Activated CD4-positive, alpha-beta T cell treated with anti-CD3 and anti-CD28 coated beads for 36 hours (primary cell): ENCODE measurements at regions of chr17 and their contacts with region 1.

Region 1: GRCh38 chr17:66301797-66302741 is at the start of gene PRKCA:
- DNase-seq: peak; percentile 85
- ATAC-seq: peak; percentile 59
- H3K4me3 Mint-ChIP-seq: peak within 1 kb of the TSS; percentile 97
- H3K27ac Mint-ChIP-seq: peak within 1 kb of the TSS; percentile 100
- H3K4me1 Mint-ChIP-seq: peaks cover 42% of the 10 kb centered on the region
- H3K27me3 Mint-ChIP-seq: no peaks in the 10 kb centered on the region
- total RNA-seq, gene PRKCA: 73.3 to 77.0 TPM

Region 2: GRCh38 chr17:65931246-65932149 is 370.6 kb before region 1 on chr17:
- CTCF ChIA-PET with region 1: no interaction called
- POLR2A ChIA-PET with region 1: no interaction called
- intact Hi-C with region 1: no loop called
- DNase-seq: no peak
- ATAC-seq: no peak
- H3K4me3 Mint-ChIP-seq: no peak overlapping the region
- H3K27ac Mint-ChIP-seq: no peak overlapping the region
- H3K4me1 Mint-ChIP-seq: peaks cover 2% of the 10 kb centered on the region
- H3K27me3 Mint-ChIP-seq: peaks cover 5% of the 10 kb centered on the region

Region 3: DNA sequence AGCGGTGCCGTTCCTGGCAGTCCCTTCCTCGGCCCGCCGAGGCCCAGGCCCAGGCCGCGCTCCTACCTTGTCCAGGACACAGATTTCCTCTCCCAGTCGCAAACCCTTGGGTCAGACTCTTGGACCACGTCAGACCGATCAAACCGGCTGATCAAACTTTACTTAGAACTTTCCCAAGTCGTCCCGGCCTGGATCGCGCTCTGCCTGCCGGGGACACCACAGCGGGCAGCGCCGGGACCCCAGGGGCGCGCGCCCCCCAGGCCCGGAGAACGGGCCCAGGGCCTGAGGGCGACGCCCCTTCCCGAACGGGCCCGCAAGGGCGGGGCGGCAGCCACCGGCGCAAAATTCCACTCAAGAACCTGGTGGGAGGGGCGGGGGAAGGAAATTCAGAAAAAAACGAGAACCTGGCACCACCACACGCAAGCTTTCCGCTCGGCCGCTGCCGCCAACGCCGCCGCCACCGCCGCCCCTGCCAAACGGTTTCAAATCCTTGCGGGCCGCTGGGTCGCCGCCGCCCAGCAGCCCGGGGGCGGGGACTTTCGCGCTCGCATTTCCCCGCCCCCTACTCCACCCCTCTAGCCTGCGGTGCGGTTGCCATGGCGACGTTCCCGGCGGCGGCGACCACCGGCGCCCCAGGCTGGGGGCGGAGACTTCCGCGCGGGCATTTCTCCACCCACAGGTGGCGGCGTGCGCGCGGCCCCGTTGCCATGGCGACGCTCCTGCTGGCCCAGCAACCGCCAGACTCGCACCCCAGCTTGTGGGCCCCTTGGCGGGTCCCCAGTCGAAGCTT is 110.3 kb before region 1 on chr17 and contains the start of gene CEP112:
- CTCF ChIA-PET with region 1: no interaction called
- POLR2A ChIA-PET with region 1: no interaction called
- intact Hi-C with region 1: loop called in 1 of 2 experiments (anchors 1 kb)
- DNase-seq: peak; percentile 88
- ATAC-seq: peak; percentile 77
- H3K4me3 Mint-ChIP-seq: peak within 1 kb of the TSS; percentile 77
- H3K27ac Mint-ChIP-seq: peak within 1 kb of the TSS; percentile 62
- H3K4me1 Mint-ChIP-seq: peaks cover 13% of the 10 kb centered on the region
- H3K27me3 Mint-ChIP-seq: no peaks in the 10 kb centered on the region
- total RNA-seq, gene CEP112: 2.2 to 2.8 TPM

Region 4: DNA sequence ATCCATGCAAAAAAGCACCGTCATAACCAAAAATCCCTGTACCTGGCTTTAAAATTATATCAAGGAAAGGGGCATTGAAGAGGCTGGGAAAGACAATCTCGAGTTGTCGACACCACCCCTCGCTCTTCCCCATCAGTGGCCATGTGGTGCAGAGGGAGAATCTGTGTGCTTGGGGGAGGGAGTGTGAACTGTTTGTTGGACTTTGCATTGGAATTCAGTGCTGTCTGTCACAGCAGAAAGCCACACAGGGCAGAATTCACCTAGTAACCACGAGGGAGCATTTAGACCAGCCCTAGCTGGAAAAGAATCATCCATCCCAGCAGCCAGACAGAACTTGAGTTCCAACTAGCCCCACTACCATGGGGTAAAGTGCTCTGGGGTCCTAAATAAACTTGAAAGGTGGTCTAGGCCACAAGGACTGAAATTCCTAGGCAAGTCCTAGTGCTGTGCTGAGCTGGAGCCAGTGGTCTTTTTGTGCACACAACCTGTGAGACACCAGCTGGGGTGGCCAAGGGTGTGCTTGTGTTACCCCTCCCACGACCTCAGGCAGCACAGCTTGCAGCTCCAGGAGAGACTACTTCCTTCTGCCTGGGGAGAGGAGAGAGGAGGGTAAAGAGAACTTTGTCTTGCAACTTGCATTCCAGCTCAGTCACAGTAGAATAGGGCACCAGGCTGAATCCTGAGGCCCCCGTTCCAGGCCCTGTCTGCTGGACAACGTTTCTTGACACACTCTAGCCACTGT is 98.6 kb before region 1 on chr17:
- CTCF ChIA-PET with region 1: no interaction called
- POLR2A ChIA-PET with region 1: no interaction called
- intact Hi-C with region 1: no loop called
- DNase-seq: no peak
- ATAC-seq: no peak
- H3K4me3 Mint-ChIP-seq: no peak overlapping the region
- H3K27ac Mint-ChIP-seq: no peak overlapping the region
- H3K4me1 Mint-ChIP-seq: peaks cover 17% of the 10 kb centered on the region
- H3K27me3 Mint-ChIP-seq: no peaks in the 10 kb centered on the region

Region 5: DNA sequence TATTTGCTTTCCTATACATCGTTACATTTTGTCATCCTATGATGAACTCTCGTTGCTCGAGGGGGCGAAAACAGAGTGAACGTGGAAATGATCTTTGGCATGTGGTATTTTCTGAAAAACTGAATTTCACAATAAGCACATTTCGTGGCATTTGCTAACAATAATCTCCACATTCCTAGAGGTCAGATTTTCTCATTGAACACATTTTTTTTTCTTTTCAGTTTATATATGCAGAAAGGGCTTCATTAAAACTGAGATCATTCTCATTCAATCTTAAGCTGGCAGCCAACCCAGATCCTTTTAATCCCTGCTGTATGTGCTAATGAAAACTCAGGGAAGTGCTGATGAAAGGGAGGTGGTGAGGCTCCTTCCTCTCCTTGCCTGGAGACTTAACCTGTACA is 52.9 kb after region 1 on chr17:
- CTCF ChIA-PET with region 1: no interaction called
- POLR2A ChIA-PET with region 1: no interaction called
- intact Hi-C with region 1: no loop called
- DNase-seq: no peak
- ATAC-seq: no peak
- H3K4me3 Mint-ChIP-seq: no peak overlapping the region
- H3K27ac Mint-ChIP-seq: no peak overlapping the region
- H3K4me1 Mint-ChIP-seq: peaks cover 75% of the 10 kb centered on the region
- H3K27me3 Mint-ChIP-seq: no peaks in the 10 kb centered on the region

Region 6: GRCh38 chr17:66420961-66421371 is 118.9 kb after region 1 on chr17:
- CTCF ChIA-PET with region 1: interaction called, 3 read pairs
- POLR2A ChIA-PET with region 1: no interaction called
- intact Hi-C with region 1: loop called (anchors 2 to 5 kb)
- DNase-seq: no peak
- ATAC-seq: peak; percentile 60
- H3K4me3 Mint-ChIP-seq: no peak overlapping the region
- H3K27ac Mint-ChIP-seq: no peak overlapping the region
- H3K4me1 Mint-ChIP-seq: peaks cover 75% of the 10 kb centered on the region
- H3K27me3 Mint-ChIP-seq: no peaks in the 10 kb centered on the region

Region 7: GRCh38 chr17:66567234-66568170 is 265.4 kb after region 1 on chr17:
- CTCF ChIA-PET with region 1: no interaction called
- POLR2A ChIA-PET with region 1: no interaction called
- intact Hi-C with region 1: loop called in 1 of 2 experiments (anchors 5 kb)
- DNase-seq: peak; percentile 90
- ATAC-seq: peak; percentile 88
- H3K4me3 Mint-ChIP-seq: no peak overlapping the region
- H3K27ac Mint-ChIP-seq: peak overlapping the region; percentile 31
- H3K4me1 Mint-ChIP-seq: peaks cover 40% of the 10 kb centered on the region
- H3K27me3 Mint-ChIP-seq: no peaks in the 10 kb centered on the region

Region 8: GRCh38 chr17:66673668-66674315 is 371.7 kb after region 1 on chr17:
- CTCF ChIA-PET with region 1: no interaction called
- POLR2A ChIA-PET with region 1: no interaction called
- intact Hi-C with region 1: loop called (anchors 5 kb)
- DNase-seq: peak; percentile 63
- ATAC-seq: peak; percentile 80
- H3K4me3 Mint-ChIP-seq: peak overlapping the region; percentile 6
- H3K27ac Mint-ChIP-seq: peak overlapping the region; percentile 84
- H3K4me1 Mint-ChIP-seq: peaks cover 61% of the 10 kb centered on the region
- H3K27me3 Mint-ChIP-seq: no peaks in the 10 kb centered on the region

Region 9: DNA sequence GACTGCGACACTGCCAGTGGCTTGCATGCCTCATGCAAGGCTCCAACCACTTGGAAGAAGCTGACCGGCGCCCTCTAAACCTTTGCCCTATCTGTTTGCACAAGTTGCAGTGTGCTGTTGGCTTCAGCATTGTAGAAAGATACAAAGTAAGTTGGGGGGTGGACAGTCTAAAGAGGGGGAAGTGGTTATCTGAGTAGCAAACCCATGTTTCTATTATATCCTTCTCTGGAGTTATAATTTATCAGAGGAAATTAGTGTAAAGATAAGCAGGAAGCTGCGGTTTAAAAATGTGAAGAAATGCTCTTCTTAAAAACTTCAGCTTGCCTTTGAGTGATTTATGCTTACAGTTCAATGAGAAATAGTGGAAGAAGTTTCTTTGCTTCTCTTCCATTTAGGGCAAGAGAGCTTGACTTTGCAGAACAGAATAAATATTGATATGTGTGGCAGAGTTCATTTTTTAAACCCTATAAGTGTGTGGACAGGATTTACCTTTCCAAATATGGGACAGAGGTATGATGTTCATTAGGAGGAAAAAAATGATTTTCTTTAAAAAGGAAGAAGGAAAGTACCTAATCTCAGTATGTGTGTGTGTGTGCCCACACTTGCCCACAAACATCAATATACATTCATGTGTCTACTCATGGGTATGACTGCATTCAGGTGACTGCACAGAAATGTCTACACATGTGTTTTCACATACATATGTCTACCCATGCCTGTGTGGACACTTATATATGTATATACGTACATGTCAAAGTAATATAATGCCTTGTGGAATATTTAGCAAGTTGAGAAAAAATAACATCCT is 1953.9 kb after region 1 on chr17:
- CTCF ChIA-PET with region 1: no interaction called
- POLR2A ChIA-PET with region 1: no interaction called
- intact Hi-C with region 1: loop called in 1 of 2 experiments (anchors 10 kb)
- DNase-seq: peak; percentile 54
- ATAC-seq: peak; percentile 75
- H3K4me3 Mint-ChIP-seq: no peak overlapping the region
- H3K27ac Mint-ChIP-seq: peak overlapping the region; percentile 65
- H3K4me1 Mint-ChIP-seq: peaks cover 78% of the 10 kb centered on the region
- H3K27me3 Mint-ChIP-seq: no peaks in the 10 kb centered on the region